Activated T-helper 1 cell treated with anti-CD3 and anti-CD28 coated beads, Interleukin-12 subunit alpha, Interleukin-12 subunit beta, Interleukin-2, Interleukin-4 antibody, amounts not matched to agents 30 ng/mL and 10 ng/mL and 1 ng/mL, durations not matched to agents 14 hours and 24 hours and 36 hours (primary cell): ENCODE measurements at regions of chr3 and their contacts with region 1.

Region 1: DNA sequence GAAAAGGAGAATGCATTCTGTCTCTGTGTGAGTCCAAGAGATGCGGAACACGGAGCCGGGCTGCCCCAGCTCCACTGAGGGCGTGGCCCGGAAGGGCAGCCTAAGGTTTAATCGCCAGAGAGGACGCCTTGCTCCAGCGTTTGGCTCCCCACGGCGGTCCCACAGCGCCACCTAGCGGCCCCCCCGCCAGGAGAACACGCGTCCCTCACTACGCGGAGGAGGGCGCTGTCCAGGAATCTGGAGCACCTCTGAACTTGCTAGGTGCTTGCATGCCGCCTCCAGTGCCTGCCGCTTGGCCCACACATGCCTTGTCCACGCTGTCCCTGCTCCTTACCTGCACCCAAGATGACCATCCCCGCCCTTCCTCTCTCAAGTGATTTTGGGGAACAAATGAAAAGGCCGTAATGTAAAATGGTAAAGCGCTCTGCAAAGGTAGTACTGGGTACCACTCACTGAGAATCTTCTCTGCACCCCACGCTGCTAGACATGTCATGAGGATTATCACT is 14.4 kb upstream of the MRPS22 start:
- DNase-seq: peak; percentile 79
- H3K4me3 Mint-ChIP-seq: peak overlapping the region; percentile 32
- H3K27ac Mint-ChIP-seq: no peak overlapping the region
- H3K4me1 Mint-ChIP-seq: peaks cover 18% of the 10 kb centered on the region
- H3K27me3 Mint-ChIP-seq: peaks cover 21% of the 10 kb centered on the region

Region 2: DNA sequence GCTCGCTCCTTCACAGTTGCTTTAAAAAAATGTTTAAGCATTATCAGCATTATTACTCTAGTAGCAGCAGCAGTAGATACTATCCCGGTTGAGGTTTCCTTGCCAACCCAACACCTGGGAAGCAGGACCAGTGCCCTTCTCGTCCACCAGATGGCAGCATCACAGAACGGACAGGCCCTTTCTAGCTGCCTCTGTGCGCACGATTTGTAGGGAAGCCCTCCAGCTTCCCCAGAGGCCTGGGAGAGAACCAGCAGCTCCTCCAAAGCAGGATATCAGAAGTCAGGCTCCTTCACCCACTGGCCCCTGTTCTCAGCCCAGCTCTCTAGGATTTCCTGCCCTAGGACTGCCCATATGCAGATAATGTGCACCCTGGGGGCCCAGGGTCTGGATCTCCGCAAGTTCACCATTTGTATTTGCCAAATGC is 911.8 kb before region 1 on chr3:
- intact Hi-C with region 1: loop called (anchors 1 kb)
- DNase-seq: peak; percentile 42
- H3K4me3 Mint-ChIP-seq: no peak overlapping the region
- H3K27ac Mint-ChIP-seq: no peak overlapping the region
- H3K4me1 Mint-ChIP-seq: no peaks in the 10 kb centered on the region
- H3K27me3 Mint-ChIP-seq: peaks cover 13% of the 10 kb centered on the region

Region 3: GRCh38 chr3:138935848-138936740 is 393.3 kb before region 1 on chr3:
- intact Hi-C with region 1: loop called (anchors 1 kb)
- DNase-seq: peak; percentile 51
- H3K4me3 Mint-ChIP-seq: peak overlapping the region; percentile 62
- H3K27ac Mint-ChIP-seq: peak overlapping the region; percentile 68
- H3K4me1 Mint-ChIP-seq: peaks cover 15% of the 10 kb centered on the region
- H3K27me3 Mint-ChIP-seq: peaks cover 62% of the 10 kb centered on the region

Region 4: GRCh38 chr3:138941259-138941885 is 388.0 kb before region 1 on chr3:
- intact Hi-C with region 1: loop called (anchors 1 kb)
- DNase-seq: no peak
- H3K4me3 Mint-ChIP-seq: no peak overlapping the region
- H3K27ac Mint-ChIP-seq: no peak overlapping the region
- H3K4me1 Mint-ChIP-seq: peaks cover 35% of the 10 kb centered on the region
- H3K27me3 Mint-ChIP-seq: peaks cover 83% of the 10 kb centered on the region

Region 5: DNA sequence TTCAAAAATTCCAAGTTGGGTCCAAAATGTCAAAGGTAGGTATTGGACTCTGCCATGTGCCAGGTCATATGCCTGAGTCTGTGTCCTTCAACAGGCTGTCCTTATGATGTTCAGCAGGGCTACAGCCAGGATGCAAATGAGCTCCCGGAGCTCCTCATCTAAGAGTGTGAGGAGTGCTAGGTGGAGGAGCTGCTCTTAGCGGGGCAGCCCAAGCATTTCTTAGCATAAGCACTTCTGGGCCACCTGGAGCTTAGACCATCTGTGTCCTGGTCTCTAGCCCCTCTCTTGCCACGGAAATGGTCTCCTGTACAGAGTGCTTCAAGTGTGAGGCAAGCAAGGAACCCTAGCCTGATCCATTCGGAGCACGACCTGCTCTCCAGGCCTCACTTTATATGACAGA is 220.1 kb before region 1 on chr3:
- intact Hi-C with region 1: loop called (anchors 1 kb)
- DNase-seq: no peak
- H3K4me3 Mint-ChIP-seq: no peak overlapping the region
- H3K27ac Mint-ChIP-seq: no peak overlapping the region
- H3K4me1 Mint-ChIP-seq: peaks cover 9% of the 10 kb centered on the region
- H3K27me3 Mint-ChIP-seq: peaks cover 2% of the 10 kb centered on the region

Region 6: GRCh38 chr3:139677388-139678155 is 348.2 kb after region 1 on chr3 and contains the start of gene NMNAT3:
- intact Hi-C with region 1: loop called (anchors 5 kb)
- DNase-seq: peak; percentile 73
- H3K4me3 Mint-ChIP-seq: peak within 1 kb of the TSS; percentile 83
- H3K27ac Mint-ChIP-seq: no peak within 1 kb of the TSS
- H3K4me1 Mint-ChIP-seq: no peaks in the 10 kb centered on the region
- H3K27me3 Mint-ChIP-seq: peaks cover 13% of the 10 kb centered on the region
- total RNA-seq, gene NMNAT3: 1.1 and 1.2 TPM in 2 replicates